ENCODE measurements at regions of chrX and their contacts with region 1.

Region 1: GRCh38 chrX:120664081-120664480 is 34.2 kb upstream of the C1GALT1C1 start:
- DNase-seq: no peak
- ATAC-seq: no peak
- H3K4me3 ChIP-seq: no peak overlapping the region
- H3K27ac ChIP-seq: no peak overlapping the region
- H3K4me1 ChIP-seq: no peaks in the 10 kb centered on the region
- H3K27me3 ChIP-seq: no peaks in the 10 kb centered on the region
- CTCF ChIP-seq: no peak

Region 2: DNA sequence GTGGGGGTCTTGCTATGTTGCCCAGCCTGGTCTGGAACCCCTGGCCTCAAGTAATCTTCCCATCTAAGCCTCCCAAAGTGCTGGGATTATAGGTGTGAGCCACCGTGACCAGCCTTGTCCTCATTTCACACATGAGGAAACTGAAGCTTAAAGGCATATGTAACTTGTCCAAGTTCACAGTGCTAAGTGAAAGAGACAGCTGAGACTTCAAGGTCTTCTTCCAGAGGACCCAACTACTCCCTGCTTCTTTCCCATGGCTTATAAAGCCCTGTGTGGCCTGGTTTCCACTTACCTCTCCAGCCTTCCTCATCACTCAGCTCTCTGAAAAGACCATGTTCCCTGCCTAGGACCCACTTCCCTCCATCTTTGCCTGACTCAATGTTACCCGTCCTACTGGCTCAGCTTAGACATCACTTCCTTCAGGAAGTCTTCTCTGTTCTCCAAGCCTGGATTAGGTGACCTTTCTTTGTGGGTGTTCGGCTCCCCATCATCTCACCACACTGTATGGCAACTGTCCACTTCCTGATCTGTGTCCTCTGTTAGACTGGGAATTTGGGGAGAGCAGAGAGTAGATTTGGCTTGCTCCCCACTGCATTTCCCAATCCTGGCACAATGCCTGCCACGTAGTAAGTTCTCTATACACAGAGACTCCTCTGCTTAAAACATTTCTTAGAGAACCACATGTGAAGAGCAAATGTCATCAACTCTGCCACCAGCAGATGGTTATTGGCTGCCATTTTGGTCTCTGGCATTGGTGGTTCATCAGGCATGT is 164.6 kb before region 1 on chrX:
- intact Hi-C with region 1: loop called in 2 of 3 experiments (anchors 5 to 10 kb)
- DNase-seq: no peak
- ATAC-seq: no peak
- H3K4me3 ChIP-seq: no peak overlapping the region
- H3K27ac ChIP-seq: no peak overlapping the region
- H3K4me1 ChIP-seq: no peaks in the 10 kb centered on the region
- H3K27me3 ChIP-seq: peaks cover 0 to 1% (median 0%) of the 10 kb centered on the region in 4 donors
- CTCF ChIP-seq: no peak

Measured in pancreas (tissue), 10 donors.